B cell (primary cell): ENCODE measurements at regions of chr12 and their contacts with region 1.

Region 1: DNA sequence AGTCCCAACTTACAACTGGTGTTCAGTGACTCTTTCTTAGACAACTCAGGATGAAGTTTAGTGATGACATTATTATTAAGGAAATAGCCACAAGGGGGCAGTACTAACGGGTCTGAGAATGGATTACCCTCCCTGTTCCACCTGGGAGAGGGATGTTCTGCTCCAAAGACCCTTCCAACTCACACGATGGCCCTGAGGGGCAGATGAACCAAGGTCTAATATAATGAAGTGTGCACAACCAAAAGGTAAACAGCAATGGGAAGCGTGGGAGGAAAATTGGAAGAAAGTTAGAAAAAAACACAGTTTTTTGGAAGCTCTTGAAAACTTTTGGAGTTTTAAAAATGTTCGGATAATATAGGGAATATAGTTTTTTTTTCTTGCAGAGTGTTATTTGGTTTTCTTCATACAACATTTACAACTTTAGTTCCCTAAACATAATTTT is 24.0 kb downstream of the FGF6 start:
- DNase-seq: peak; percentile 59
- ATAC-seq: no peak
- H3K4me3 ChIP-seq: no peak overlapping the region
- H3K4me3 Mint-ChIP-seq: no peak overlapping the region
- H3K27ac ChIP-seq: no peak overlapping the region
- H3K27ac Mint-ChIP-seq: no peak overlapping the region
- H3K4me1 ChIP-seq: no peaks in the 10 kb centered on the region
- H3K4me1 Mint-ChIP-seq: no peaks in the 10 kb centered on the region
- H3K27me3 ChIP-seq: peaks cover 0 to 2% (median 0%) of the 10 kb centered on the region in 4 experiments
- H3K27me3 Mint-ChIP-seq: peaks cover 12% of the 10 kb centered on the region
- CTCF ChIP-seq: peak; percentile 87

Region 2: GRCh38 chr12:4203772-4204376 is 217.7 kb before region 1 on chr12:
- CTCF ChIA-PET with region 1: no interaction called
- POLR2A ChIA-PET with region 1: no interaction called
- intact Hi-C with region 1: no loop called
- DNase-seq: peak; percentile 50
- ATAC-seq: no peak
- H3K4me3 ChIP-seq: no peak overlapping the region
- H3K4me3 Mint-ChIP-seq: peak overlapping the region; percentile 50
- H3K27ac ChIP-seq: no peak overlapping the region
- H3K27ac Mint-ChIP-seq: peak overlapping the region; percentile 53
- H3K4me1 ChIP-seq: peaks cover 52 to 54% of the 10 kb centered on the region in 2 donors
- H3K4me1 Mint-ChIP-seq: peaks cover 58% of the 10 kb centered on the region
- H3K27me3 ChIP-seq: no peaks in the 10 kb centered on the region
- H3K27me3 Mint-ChIP-seq: no peaks in the 10 kb centered on the region
- CTCF ChIP-seq: no peak

Region 3: GRCh38 chr12:4431866-4432265 is 10.3 kb after region 1 on chr12:
- CTCF ChIA-PET with region 1: interaction called, 11 read pairs
- POLR2A ChIA-PET with region 1: no interaction called
- intact Hi-C with region 1: no loop called
- DNase-seq: no peak
- ATAC-seq: no peak
- H3K4me3 ChIP-seq: no peak overlapping the region
- H3K4me3 Mint-ChIP-seq: no peak overlapping the region
- H3K27ac ChIP-seq: no peak overlapping the region
- H3K27ac Mint-ChIP-seq: no peak overlapping the region
- H3K4me1 ChIP-seq: peaks cover 18 to 19% of the 10 kb centered on the region in 2 donors
- H3K4me1 Mint-ChIP-seq: peaks cover 12% of the 10 kb centered on the region
- H3K27me3 ChIP-seq: no peaks in the 10 kb centered on the region
- H3K27me3 Mint-ChIP-seq: no peaks in the 10 kb centered on the region
- CTCF ChIP-seq: no peak

Region 4: DNA sequence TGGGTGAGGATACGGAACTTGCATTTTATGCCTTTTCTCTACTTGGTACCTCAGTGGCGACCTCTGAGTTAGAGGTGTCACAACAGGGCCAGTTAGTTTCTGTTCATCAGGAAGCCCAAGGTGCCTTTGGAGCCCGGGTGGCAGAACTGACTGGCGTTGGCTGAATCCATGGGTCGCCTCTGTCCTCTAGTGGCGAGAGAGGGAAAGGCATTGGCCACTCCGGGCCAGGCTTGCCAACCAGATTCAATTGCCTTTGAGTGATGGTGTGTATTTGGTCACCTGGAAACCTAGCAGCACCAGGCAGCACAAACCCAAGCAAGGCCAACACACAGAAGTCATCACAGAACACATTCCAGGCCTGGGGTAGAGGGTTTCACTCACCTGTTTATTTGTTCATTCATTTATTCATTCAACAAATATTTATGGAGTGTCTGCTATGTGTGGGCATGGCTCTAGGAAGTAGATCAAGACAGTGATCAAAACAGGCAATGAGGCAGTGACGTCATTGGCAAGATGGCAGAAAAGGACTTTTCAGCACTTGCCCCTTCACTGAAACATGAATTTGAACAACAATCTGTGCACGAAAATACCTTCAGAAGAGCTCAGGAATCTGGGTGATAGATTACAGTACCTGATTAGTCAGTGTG is 581.5 kb after region 1 on chr12:
- CTCF ChIA-PET with region 1: no interaction called
- POLR2A ChIA-PET with region 1: no interaction called
- intact Hi-C with region 1: loop called (anchors 2 kb)
- DNase-seq: peak; percentile 62
- ATAC-seq: peak; percentile 60
- H3K4me3 ChIP-seq: no peak overlapping the region
- H3K4me3 Mint-ChIP-seq: no peak overlapping the region
- H3K27ac ChIP-seq: no peak overlapping the region
- H3K27ac Mint-ChIP-seq: no peak overlapping the region
- H3K4me1 ChIP-seq: no peaks in the 10 kb centered on the region
- H3K4me1 Mint-ChIP-seq: no peaks in the 10 kb centered on the region
- H3K27me3 ChIP-seq: peaks cover 0 to 36% (median 5%) of the 10 kb centered on the region in 4 experiments
- H3K27me3 Mint-ChIP-seq: peaks cover 23% of the 10 kb centered on the region
- CTCF ChIP-seq: peak; percentile 82